Spleen (tissue), 13 donors: ENCODE measurements at regions of chr12 and their contacts with region 1.

Region 1: GRCh38 chr12:5200278-5201087 is 156.8 kb downstream of the KCNA5 start:
- DNase-seq: peak; percentile 77
- H3K4me3 ChIP-seq: no peak overlapping the region
- H3K27ac ChIP-seq: peak overlapping the region in 1 of 8 donors; percentile 43
- H3K4me1 ChIP-seq: peaks cover 0 to 17% (median 5%) of the 10 kb centered on the region in 6 donors
- H3K27me3 ChIP-seq: peaks cover 0 to 30% (median 0%) of the 10 kb centered on the region in 7 donors
- CTCF ChIP-seq: peak in 10 of 11 experiments; percentile 14 to 75 (median 55)
- POLR2A ChIP-seq: no peak

Region 2: DNA sequence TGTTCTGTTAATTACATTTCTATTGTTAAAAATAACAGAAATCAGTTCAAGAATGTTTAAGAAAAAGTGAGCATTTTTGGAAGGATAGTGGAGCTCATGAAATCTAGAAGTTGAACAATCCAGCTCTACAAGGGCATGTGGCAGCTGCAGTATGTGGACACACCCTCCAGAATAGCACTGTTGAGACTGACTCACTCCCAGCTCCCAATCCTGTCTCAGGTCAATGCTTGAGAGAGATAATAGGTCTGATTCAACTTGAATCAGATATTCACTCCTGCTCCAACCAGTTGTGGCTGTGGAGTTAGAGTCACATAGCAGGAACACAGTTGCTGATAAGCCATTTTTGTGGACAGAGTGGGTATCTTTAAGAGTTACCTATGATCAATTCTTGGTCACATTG is 118.4 kb after region 1 on chr12:
- intact Hi-C with region 1: no loop called
- DNase-seq: no peak
- H3K4me3 ChIP-seq: no peak overlapping the region
- H3K27ac ChIP-seq: no peak overlapping the region
- H3K4me1 ChIP-seq: no peaks in the 10 kb centered on the region
- H3K27me3 ChIP-seq: no peaks in the 10 kb centered on the region
- CTCF ChIP-seq: no peak
- POLR2A ChIP-seq: no peak

Region 3: GRCh38 chr12:5442251-5443006 is 241.9 kb after region 1 on chr12:
- intact Hi-C with region 1: loop called (anchors 10 kb)
- DNase-seq: no peak
- H3K4me3 ChIP-seq: no peak overlapping the region
- H3K27ac ChIP-seq: no peak overlapping the region
- H3K4me1 ChIP-seq: peaks cover 0 to 25% (median 1%) of the 10 kb centered on the region in 6 donors
- H3K27me3 ChIP-seq: peaks cover 0 to 74% (median 0%) of the 10 kb centered on the region in 7 donors
- CTCF ChIP-seq: peak; percentile 11 to 65 (median 43)
- POLR2A ChIP-seq: no peak